ENCODE measurements at regions of chr15 and their contacts with region 1.

Region 1: DNA sequence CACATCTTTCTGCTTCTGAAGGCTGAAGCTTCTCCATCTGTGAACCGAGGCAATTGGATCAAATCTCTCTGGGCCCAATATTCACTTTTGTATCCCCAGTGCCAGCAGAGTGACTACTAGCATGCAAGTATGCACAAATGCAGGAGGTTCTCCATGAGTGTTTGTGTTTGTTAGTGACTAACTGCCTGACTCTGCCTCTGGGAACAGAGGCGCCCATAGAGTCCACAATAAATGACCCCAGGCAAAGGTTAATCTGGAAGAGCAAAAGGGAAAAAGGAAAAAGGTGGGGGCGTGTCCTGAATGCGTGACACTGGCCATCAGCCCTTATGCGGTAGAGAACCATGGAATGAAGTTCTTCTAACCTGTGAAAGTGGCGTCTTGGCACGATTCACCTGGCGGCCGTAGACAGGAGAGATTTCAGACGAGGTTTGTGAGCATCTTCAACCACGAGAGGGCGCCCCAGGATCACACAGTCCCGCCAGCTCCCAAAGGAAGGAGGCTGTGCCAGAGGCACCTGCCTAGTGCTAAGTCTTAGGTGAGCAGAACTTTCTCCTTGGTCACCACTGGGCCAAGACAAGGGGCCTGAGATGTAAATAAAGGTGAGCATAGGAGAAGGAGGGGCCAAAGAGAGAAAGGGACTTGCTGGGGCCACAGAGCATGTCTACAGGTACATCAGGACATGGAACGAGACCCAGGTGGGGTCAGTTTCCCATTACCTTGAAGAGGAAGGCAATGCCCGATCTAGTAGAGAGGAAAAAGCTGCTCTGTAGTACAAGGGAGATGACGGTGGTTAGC is 44.2 kb downstream of the RBPMS2 start:
- DNase-seq: peak; percentile 90
- H3K4me3 Mint-ChIP-seq: no peak overlapping the region
- H3K27ac Mint-ChIP-seq: no peak overlapping the region
- H3K4me1 Mint-ChIP-seq: peaks cover 1% of the 10 kb centered on the region
- H3K27me3 Mint-ChIP-seq: peaks cover under 1% of the 10 kb centered on the region

Region 2: GRCh38 chr15:64246364-64247189 is 484.6 kb before region 1 on chr15:
- CTCF ChIA-PET with region 1: no interaction called
- POLR2A ChIA-PET with region 1: interaction called, 10 read pairs
- DNase-seq: peak; percentile 47
- H3K4me3 Mint-ChIP-seq: no peak overlapping the region
- H3K27ac Mint-ChIP-seq: peak overlapping the region; percentile 4
- H3K4me1 Mint-ChIP-seq: peaks cover 49% of the 10 kb centered on the region
- H3K27me3 Mint-ChIP-seq: no peaks in the 10 kb centered on the region

Region 3: GRCh38 chr15:64683378-64683777 is 47.8 kb before region 1 on chr15:
- CTCF ChIA-PET with region 1: interaction called, 12 read pairs
- POLR2A ChIA-PET with region 1: no interaction called
- DNase-seq: no peak
- H3K4me3 Mint-ChIP-seq: no peak overlapping the region
- H3K27ac Mint-ChIP-seq: no peak overlapping the region
- H3K4me1 Mint-ChIP-seq: peaks cover 4% of the 10 kb centered on the region
- H3K27me3 Mint-ChIP-seq: no peaks in the 10 kb centered on the region